BJ (cell line): ENCODE measurements at regions of chr11 and their contacts with region 1.

Region 1: DNA sequence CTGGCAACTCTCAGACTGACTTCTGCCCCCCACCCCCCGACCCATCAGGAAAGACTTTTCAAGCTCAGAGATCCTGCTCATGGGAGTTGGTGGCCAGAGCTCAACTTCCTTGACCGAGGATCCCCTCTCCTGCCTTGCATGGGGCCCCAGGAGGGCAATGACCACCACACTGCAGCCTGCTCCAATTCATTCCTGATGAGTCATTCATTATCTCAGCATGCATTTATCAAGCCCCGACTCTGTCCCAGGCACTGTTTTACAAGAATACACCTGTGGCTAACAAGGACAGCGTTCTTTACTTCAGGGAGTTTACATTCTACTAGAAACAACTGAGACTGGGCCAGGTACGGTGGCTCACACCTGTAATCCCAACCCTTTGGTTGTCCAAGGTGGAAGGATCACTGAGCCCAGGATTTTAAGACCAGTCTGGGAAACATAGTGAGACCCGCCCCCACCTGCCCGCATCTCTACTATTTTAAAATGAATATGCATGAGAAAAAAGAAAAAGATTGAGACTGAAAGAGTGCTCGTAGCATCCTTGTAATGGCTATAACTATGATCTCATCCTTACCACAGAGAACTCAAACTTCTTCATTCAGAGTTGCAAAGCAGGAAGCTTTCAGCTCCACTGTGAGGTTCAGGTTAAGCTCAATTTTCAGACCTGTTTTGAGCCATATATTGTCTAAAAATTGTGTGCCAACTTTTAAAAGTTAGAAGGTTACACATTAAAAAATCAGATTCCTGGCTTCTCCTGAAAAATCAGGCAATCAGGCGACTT is 60.4 kb downstream of the FEZ1 start:
- DNase-seq: no peak
- H3K4me3 ChIP-seq: no peak overlapping the region
- H3K27me3 ChIP-seq: peaks cover 2% of the 10 kb centered on the region; the same call in 1 of the 2 replicates
- CTCF ChIP-seq: no peak

Region 2: GRCh38 chr11:125413226-125413625 is 22.4 kb before region 1 on chr11:
- CTCF ChIA-PET with region 1: interaction called, 5 read pairs
- POLR2A ChIA-PET with region 1: interaction called, 23 read pairs
- DNase-seq: no peak
- H3K4me3 ChIP-seq: no peak overlapping the region
- H3K27me3 ChIP-seq: peaks cover 20% of the 10 kb centered on the region
- CTCF ChIP-seq: no peak